AG04450 (cell line): ENCODE measurements at regions of chr2 and their contacts with region 1.

Region 1: GRCh38 chr2:74458132-74458925 is at the start of gene WBP1:
- DNase-seq: peak; percentile 100
- H3K4me3 ChIP-seq: peak within 1 kb of the TSS; percentile 68
- H3K27ac ChIP-seq: peak within 1 kb of the TSS; percentile 92
- H3K27me3 ChIP-seq: no peaks in the 10 kb centered on the region
- CTCF ChIP-seq: no peak
- polyA plus RNA-seq, gene WBP1: 56.0 and 68.5 TPM in 2 replicates

Region 2: GRCh38 chr2:74373221-74373676 is 85.1 kb before region 1 on chr2:
- CTCF ChIA-PET with region 1: no interaction called
- POLR2A ChIA-PET with region 1: no interaction called
- DNase-seq: no peak
- H3K4me3 ChIP-seq: no peak overlapping the region
- H3K27ac ChIP-seq: no peak overlapping the region
- H3K27me3 ChIP-seq: no peaks in the 10 kb centered on the region
- CTCF ChIP-seq: no peak

Region 3: DNA sequence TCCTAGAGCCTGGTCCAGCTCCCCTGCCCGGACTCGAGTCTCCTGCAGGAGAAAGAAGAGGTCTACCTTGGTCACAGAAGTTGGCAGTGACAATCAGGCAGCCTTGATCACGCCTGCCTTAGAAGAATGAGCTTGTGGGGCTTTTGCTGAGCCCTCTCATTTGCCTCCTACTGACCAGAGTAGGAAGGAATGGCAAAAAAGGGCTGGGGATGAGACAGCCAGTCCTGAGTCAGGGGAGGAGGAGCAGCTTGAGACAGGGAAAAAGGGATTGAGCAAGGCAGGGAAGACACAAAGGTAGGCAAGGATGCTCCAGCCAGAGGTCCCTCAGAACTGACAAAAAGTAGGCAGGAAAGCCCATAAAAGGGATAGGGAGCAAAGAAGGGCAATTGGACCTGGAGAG is 30.8 kb before region 1 on chr2:
- CTCF ChIA-PET with region 1: no interaction called
- POLR2A ChIA-PET with region 1: no interaction called
- DNase-seq: no peak
- H3K4me3 ChIP-seq: no peak overlapping the region
- H3K27ac ChIP-seq: no peak overlapping the region
- H3K27me3 ChIP-seq: no peaks in the 10 kb centered on the region
- CTCF ChIP-seq: no peak

Region 4: DNA sequence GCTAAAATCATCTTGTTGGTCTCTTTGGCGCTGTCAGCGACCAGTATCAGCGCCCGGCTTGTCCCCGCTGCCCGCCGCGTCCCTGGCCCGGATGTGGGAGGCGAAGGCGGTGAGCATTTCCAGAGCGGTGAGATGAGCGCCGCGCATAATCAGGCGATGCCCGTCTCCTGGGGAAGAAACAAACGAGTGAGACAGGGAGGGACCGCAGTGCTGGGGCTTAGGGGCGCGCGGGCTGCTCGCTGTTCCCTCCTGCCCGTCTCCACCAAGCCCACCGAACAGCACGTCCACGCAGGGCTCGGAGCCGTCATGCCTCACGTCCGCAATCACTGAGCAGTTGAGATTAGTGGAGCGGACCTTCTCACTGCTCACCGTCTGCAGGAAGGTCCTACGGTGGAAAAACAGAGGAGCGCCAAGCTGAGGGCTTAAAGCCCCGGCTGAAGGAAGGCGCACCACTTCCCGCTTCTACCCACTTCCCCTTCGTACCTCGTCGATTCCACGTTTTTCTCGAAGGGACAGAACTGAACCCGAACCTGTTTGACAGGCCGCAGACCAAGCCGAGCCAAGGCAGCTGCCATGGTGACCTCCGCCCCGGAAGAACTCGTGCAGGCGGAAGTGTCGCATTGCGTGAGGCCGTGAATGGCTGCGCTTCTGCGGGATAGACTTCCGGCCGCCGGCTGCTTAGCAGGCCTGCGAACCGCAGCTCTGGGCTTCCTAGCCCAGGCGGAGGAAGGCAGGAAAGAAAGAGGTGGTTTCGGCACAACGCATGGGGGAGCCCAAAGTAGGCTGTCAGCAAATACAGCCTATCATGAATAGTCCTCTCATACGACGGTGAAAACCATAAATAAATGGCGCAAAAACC is 14.0 kb after region 1 on chr2 and contains the start of gene MRPL53:
- CTCF ChIA-PET with region 1: interaction called, 3 read pairs
- POLR2A ChIA-PET with region 1: interaction called, 13 read pairs
- DNase-seq: peak; percentile 83
- H3K4me3 ChIP-seq: peak within 1 kb of the TSS; percentile 89
- H3K27ac ChIP-seq: peak within 1 kb of the TSS; percentile 89
- H3K27me3 ChIP-seq: no peaks in the 10 kb centered on the region
- CTCF ChIP-seq: no peak
- polyA plus RNA-seq, gene MRPL53: 25.9 and 32.8 TPM in 2 replicates

Region 5: DNA sequence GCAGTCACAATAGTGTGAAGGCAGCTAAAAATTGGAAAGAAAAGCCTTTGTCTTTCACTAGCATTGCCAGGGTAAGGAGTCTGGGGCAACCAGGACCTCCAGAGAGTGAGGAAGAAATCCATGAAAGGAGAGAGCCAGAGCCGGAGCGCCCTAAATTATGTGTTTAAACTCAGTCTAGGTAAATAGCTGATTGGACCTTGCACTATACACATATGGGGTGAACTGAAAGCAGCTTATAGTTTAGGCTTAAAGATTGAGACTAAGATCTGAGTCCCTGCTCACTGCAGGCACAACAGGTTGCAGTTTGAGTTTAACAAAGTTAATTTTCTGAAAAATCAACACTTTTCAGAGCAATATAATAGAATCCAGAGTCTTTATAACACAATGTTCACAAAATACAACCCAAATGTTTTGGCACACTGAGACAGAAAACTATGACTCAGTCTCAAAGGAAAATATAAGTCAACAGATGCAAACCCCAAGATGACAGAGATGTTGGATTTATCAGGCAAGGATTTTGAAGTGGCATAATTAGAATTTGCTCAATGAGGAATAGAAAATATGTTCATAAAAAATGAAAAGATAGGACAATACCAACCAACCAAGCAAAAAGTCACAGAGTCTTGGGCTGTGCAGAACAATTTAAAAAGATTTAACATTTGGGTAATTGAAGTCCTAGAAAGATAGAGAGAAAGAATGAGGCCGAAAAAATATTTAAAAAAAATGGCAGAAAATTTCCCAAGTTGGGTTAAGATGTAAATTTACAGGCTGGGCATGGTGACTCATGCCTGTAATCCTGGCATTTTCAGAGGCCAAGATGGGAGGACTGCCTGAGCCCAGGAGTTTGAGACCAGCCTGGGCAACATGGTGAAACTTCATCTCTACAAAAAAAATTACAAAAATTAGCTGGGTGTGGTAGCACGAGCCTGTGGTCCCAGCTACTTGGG is 135.8 kb after region 1 on chr2:
- CTCF ChIA-PET with region 1: no interaction called
- POLR2A ChIA-PET with region 1: no interaction called
- DNase-seq: no peak
- H3K4me3 ChIP-seq: no peak overlapping the region
- H3K27ac ChIP-seq: no peak overlapping the region
- H3K27me3 ChIP-seq: peaks cover 23% of the 10 kb centered on the region
- CTCF ChIP-seq: no peak

Region 6: DNA sequence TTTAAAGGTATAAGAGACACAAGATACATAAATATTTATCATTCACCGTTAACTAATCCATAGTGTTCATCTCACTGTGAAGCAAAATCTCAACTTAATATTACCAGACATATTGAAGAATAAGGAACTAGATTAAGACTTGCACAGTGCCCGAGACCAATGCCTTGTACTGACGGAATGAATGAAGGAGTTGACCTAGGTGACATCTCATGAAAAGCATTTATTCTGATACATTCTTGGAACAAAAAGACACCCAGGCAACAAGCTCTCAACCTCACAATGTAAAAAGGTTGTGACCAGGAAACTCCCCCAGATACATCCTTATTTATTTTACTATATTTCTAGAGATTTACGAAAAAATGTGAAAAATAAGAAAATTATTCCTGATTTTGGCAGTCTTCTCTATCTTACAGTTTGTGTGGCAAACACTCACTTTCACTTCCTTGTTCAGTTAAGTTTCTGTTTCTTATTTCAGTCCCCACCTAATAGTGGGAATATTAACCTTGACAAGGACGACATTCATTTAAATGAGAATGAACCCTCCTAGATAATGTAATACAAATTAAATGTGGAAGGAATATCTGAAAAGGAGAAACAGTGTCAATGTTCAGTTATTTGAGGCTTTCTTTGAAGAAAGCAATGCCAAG is 161.4 kb after region 1 on chr2:
- CTCF ChIA-PET with region 1: interaction called, 14 read pairs
- POLR2A ChIA-PET with region 1: no interaction called
- DNase-seq: no peak
- H3K4me3 ChIP-seq: no peak overlapping the region
- H3K27ac ChIP-seq: no peak overlapping the region
- H3K27me3 ChIP-seq: peaks cover 25% of the 10 kb centered on the region
- CTCF ChIP-seq: no peak